Activated CD8-positive, alpha-beta T cell treated with anti-CD3 and anti-CD28 coated beads for 36 hours (primary cell): ENCODE measurements at regions of chr6 and their contacts with region 1.

Region 1: DNA sequence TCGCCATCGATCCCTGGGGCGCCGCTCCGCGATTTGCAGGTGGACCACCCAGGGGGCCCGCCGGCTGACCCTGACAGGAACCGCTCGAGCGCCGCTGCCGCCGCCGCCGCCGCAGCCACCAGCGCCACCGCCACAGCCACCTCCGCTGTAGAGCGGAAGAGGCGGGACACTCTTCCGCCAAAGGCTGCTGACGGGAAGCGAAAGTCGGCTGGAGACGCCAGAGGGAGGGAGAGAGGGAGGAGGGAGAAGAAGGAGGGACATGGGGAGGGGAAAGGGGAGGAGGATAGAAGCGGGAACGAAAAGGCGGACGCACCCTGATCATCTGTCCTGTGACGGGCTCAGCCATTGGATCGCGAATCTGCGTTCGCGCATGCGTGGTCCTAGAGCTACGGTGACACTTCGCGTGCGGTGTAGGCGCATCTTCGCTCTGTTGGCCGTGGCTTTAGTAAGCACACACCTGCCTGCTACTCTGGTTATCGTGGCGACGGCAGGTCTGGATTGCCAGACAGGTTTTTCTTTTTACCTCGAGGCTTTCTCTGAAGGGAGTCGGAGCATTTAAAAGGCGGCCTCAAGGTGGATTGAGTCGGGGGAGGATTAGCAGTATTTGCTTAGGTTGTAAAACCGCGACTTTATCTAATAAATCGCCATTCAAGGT is at the start of gene TMEM30A:
- DNase-seq: peak; percentile 97
- ATAC-seq: peak; percentile 98
- H3K4me3 Mint-ChIP-seq: no peak within 1 kb of the TSS
- H3K27ac Mint-ChIP-seq: no peak within 1 kb of the TSS
- H3K4me1 Mint-ChIP-seq: peaks cover 43% of the 10 kb centered on the region
- H3K27me3 Mint-ChIP-seq: no peaks in the 10 kb centered on the region
- CTCF ChIP-seq: no peak
- total RNA-seq, gene TMEM30A: 39.7 to 39.9 TPM

Region 2: DNA sequence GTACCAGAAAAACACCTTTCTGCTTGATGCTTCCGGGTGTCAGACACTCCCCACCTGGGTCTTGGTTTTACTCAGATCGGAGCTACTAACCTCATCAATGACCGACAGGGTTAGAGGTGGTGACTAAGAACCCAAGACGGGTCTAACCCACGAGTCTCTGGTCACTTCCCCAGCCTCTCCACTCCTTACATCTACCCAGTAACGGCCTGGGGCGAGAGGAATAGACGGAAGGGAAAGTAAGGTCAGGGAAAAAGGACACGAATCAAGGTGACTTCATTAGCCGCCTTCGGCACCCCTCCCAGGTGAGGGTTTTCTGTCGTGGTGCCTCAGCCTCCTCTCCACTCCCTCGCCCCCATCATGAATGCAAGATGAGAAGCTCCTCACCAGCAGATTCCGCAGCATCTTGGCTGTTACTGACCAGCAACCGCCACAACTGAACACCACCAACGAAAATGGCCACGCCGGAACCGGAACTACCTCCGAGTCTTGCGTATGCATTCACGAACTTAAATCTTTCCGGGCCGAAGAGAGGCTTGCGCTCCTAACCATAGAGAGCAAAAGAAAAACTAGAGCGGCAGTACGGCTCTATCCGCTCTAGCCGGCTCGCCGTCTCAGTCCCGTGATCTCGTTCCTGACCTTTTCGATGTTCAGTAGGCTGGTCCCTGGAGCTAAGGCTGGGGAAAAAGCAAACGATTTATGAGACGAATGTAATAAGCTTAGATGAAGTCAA is 41.3 kb before region 1 on chr6 and contains the start of gene COX7A2:
- CTCF ChIA-PET with region 1: interaction called, 7 read pairs
- POLR2A ChIA-PET with region 1: interaction called, 22 read pairs
- intact Hi-C with region 1: loop called (anchors 2 kb)
- DNase-seq: peak; percentile 93
- ATAC-seq: peak; percentile 97
- H3K4me3 Mint-ChIP-seq: peak within 1 kb of the TSS; percentile 99
- H3K27ac Mint-ChIP-seq: peak within 1 kb of the TSS; percentile 99
- H3K4me1 Mint-ChIP-seq: peaks cover 26% of the 10 kb centered on the region
- H3K27me3 Mint-ChIP-seq: peaks cover 8% of the 10 kb centered on the region
- CTCF ChIP-seq: no peak
- total RNA-seq, gene COX7A2: 481 to 485 TPM

Region 3: DNA sequence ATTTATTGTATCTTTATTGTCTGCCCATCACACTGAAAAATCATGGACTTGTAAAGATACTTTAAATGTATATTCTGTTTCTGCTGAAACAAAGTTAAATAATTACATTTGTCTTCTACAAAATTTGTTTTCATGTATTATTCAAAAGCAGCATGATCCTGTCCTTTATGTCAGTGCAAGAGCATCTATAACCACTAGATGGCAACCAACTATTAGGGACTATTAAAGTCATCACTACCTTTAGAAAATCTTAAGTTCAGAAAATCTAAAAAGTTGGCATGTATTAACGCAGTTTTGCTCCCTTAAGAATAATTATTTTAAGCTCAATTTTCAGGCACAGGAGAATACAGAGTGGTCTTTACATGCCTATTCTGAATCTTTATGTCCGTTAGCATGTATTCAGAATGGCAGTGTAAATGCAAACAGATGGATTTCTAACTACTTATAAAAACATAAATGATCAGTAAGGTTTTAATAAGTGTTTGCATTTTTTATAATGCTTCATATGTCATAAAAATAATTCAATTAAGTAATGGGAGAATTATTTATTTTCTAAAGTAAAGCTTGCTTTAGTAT is 18.0 kb before region 1 on chr6:
- CTCF ChIA-PET with region 1: interaction called, 41 read pairs
- POLR2A ChIA-PET with region 1: no interaction called
- intact Hi-C with region 1: no loop called
- DNase-seq: no peak
- ATAC-seq: peak; percentile 64
- H3K4me3 Mint-ChIP-seq: no peak overlapping the region
- H3K27ac Mint-ChIP-seq: no peak overlapping the region
- H3K4me1 Mint-ChIP-seq: peaks cover 38% of the 10 kb centered on the region
- H3K27me3 Mint-ChIP-seq: no peaks in the 10 kb centered on the region
- CTCF ChIP-seq: peak; percentile 83

Region 4: GRCh38 chr6:75296811-75297779 is 12.3 kb after region 1 on chr6:
- CTCF ChIA-PET with region 1: interaction called, 12 read pairs
- POLR2A ChIA-PET with region 1: interaction called, 4 read pairs
- intact Hi-C with region 1: no loop called
- DNase-seq: no peak
- ATAC-seq: peak; percentile 74
- H3K4me3 Mint-ChIP-seq: no peak overlapping the region
- H3K27ac Mint-ChIP-seq: no peak overlapping the region
- H3K4me1 Mint-ChIP-seq: peaks cover 6% of the 10 kb centered on the region
- H3K27me3 Mint-ChIP-seq: no peaks in the 10 kb centered on the region
- CTCF ChIP-seq: peak; percentile 79

Region 5: DNA sequence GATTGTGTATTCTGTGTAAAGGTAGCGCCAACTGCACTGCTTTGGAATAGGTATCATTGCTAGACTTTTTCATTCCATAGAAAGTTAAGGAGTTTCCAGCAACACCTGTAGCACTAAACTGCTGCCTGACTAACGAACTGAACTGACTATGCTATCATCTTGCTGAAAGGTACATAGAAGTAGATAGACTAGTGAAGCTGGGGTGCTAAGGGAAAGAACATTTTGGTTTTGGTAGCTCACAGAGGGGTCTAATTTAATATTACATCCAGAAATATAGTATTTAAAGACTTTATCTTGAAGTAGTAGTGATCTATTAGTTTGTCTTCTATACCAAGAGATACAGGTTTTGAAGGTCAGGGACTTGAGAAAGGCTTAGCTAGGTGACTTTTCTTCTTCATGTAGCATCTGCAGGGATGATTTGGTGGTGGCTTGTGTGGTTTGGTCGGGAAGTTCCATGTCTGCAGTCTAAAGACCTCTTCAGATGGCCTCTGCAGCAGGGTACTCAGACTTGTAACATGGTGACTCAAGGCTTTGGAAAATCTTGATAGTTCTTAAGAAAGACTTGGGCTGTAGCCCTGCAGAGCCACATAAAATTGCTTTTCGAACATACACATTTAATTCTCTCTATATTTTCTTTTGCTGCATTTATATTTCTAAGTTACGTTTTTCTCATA is 327.1 kb after region 1 on chr6:
- CTCF ChIA-PET with region 1: no interaction called
- POLR2A ChIA-PET with region 1: no interaction called
- intact Hi-C with region 1: loop called (anchors 5 kb)
- DNase-seq: peak; percentile 84
- ATAC-seq: peak; percentile 85
- H3K4me3 Mint-ChIP-seq: peak overlapping the region; percentile 26
- H3K27ac Mint-ChIP-seq: peak overlapping the region; percentile 62
- H3K4me1 Mint-ChIP-seq: peaks cover 80% of the 10 kb centered on the region
- H3K27me3 Mint-ChIP-seq: no peaks in the 10 kb centered on the region
- CTCF ChIP-seq: no peak